HEK293 (cell line): ENCODE measurements at regions of chr4 and their contacts with region 1.

Region 1: GRCh38 chr4:87093443-87094123 is 126.8 kb downstream of the KLHL8 start:
- H3K4me3 ChIP-seq: no peak overlapping the region
- H3K27ac ChIP-seq: no peak overlapping the region
- H3K4me1 ChIP-seq: peaks cover 5% of the 10 kb centered on the region; the same call in 1 of the 2 replicates
- CTCF ChIP-seq: no peak

Region 2: DNA sequence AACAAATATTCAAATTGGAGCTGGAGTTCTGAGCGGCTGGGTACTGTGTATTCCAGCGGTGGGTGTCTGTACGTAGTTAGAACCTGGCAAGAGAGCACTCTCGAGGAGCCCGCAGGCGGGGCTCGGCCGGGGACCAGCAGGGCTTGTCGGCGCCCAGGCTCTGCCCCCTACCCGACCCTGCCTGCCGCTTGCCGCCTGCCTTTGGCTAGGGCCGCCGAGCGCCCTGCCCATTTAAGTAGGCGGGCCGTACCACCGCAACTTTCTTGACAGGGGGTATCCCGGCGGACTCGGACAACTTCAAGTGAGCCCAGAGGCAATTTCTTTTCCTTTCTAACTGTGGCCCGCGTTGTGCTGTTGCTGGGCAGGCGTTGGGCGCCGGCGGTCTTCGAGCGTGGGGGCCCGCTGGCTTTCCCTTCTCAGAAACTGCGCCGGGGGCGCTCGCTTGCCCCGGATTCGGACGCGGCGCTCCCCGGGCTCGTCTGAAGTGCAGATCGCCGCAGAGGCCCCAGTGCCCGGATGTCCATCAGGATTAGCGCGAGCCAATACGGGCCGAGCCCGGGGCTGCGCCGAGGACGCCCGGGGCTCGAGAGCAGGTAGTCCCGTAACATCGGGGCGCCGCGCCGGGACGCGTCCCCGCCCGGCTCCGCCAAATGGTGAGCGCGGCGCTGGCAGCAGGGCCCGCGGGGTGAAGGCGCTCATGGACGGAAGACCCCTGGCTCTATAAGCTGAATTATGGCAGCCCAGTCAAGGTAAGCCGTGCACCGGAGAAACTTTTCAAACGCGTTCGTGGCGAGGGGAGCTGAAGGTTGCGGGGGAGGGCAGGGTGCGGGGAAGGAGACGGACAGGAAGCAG is 86.7 kb before region 1 on chr4:
- CTCF ChIA-PET with region 1: interaction called, 5 read pairs
- POLR2A ChIA-PET with region 1: interaction called, 11 read pairs
- H3K4me3 ChIP-seq: peak overlapping the region; percentile 58
- H3K27ac ChIP-seq: peak overlapping the region; percentile 95
- H3K4me1 ChIP-seq: peaks cover 3% of the 10 kb centered on the region; the same call in 1 of the 2 replicates
- CTCF ChIP-seq: peak; percentile 46; the same call in 1 of the 2 replicates